CD14-positive monocyte (primary cell): ENCODE measurements at regions of chr6 and their contacts with region 1.

Region 1: GRCh38 chr6:44172731-44173500 is 14.3 kb downstream of the CAPN11 start:
- DNase-seq: peak; percentile 77 to 82 (median 80)
- H3K4me3 ChIP-seq: no peak overlapping the region
- H3K4me3 Mint-ChIP-seq: no peak overlapping the region
- H3K27ac ChIP-seq: no peak overlapping the region
- H3K27ac Mint-ChIP-seq: peak overlapping the region in 1 of 7 donors; percentile 64
- H3K4me1 ChIP-seq: peaks cover 11 to 13% of the 10 kb centered on the region in 2 donors
- H3K4me1 Mint-ChIP-seq: peaks cover 19% of the 10 kb centered on the region
- H3K27me3 ChIP-seq: no peaks in the 10 kb centered on the region
- H3K27me3 Mint-ChIP-seq: peaks cover 9 to 15% (median 11%) of the 10 kb centered on the region in 3 donors
- CTCF ChIP-seq: peak; percentile 84

Region 2: DNA sequence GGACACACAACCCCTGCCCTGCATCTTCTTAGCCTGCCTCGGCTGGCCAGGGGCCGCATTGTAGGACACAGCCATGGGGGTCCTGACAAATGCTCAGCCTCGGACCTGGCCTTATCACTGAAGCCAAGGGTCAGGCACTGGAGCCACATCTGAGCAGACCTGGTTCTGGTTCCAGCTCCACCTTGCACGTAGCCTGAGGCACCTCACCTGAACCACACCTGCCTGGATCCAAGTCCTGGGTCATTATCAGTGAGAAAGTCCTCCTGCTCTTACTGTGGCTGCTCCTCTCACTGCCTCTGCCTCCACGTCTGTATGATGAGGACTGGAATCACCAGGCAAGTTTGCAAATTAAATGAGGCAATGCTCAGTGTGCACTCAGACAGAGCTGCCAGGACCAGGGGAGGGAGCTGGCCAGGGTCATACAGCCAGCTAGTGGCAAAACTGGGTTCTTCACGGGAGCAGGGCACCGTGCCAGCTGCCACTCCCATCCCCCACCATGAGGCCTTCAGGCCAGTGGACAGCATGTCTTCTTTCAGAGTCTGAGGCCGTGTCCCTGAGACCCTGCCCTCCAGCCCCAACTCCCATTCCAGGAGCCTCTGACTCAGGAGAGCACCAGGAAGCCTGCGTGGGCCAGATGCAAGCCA is 85.9 kb before region 1 on chr6:
- intact Hi-C with region 1: no loop called
- DNase-seq: no peak
- H3K4me3 ChIP-seq: no peak overlapping the region
- H3K4me3 Mint-ChIP-seq: no peak overlapping the region
- H3K27ac ChIP-seq: no peak overlapping the region
- H3K27ac Mint-ChIP-seq: peak overlapping the region in 1 of 7 donors; percentile 74
- H3K4me1 ChIP-seq: no peaks in the 10 kb centered on the region
- H3K4me1 Mint-ChIP-seq: no peaks in the 10 kb centered on the region
- H3K27me3 ChIP-seq: no peaks in the 10 kb centered on the region
- H3K27me3 Mint-ChIP-seq: peaks cover 0 to 3% (median 0%) of the 10 kb centered on the region in 3 donors
- CTCF ChIP-seq: no peak

Region 3: GRCh38 chr6:44237813-44238433 is 65.0 kb after region 1 on chr6:
- intact Hi-C with region 1: loop called (anchors 5 kb)
- DNase-seq: peak; percentile 84 to 90 (median 85)
- H3K4me3 ChIP-seq: peak overlapping the region; percentile 56 to 86 (median 76)
- H3K4me3 Mint-ChIP-seq: peak overlapping the region; percentile 83 to 90
- H3K27ac ChIP-seq: peak overlapping the region; percentile 65 to 96
- H3K27ac Mint-ChIP-seq: peak overlapping the region; percentile 90 to 99 (median 97)
- H3K4me1 ChIP-seq: peaks cover 29 to 32% of the 10 kb centered on the region in 2 donors
- H3K4me1 Mint-ChIP-seq: peaks cover 38% of the 10 kb centered on the region
- H3K27me3 ChIP-seq: no peaks in the 10 kb centered on the region
- H3K27me3 Mint-ChIP-seq: peaks cover 2 to 3% (median 3%) of the 10 kb centered on the region in 3 donors
- CTCF ChIP-seq: peak; percentile 99

Region 4: DNA sequence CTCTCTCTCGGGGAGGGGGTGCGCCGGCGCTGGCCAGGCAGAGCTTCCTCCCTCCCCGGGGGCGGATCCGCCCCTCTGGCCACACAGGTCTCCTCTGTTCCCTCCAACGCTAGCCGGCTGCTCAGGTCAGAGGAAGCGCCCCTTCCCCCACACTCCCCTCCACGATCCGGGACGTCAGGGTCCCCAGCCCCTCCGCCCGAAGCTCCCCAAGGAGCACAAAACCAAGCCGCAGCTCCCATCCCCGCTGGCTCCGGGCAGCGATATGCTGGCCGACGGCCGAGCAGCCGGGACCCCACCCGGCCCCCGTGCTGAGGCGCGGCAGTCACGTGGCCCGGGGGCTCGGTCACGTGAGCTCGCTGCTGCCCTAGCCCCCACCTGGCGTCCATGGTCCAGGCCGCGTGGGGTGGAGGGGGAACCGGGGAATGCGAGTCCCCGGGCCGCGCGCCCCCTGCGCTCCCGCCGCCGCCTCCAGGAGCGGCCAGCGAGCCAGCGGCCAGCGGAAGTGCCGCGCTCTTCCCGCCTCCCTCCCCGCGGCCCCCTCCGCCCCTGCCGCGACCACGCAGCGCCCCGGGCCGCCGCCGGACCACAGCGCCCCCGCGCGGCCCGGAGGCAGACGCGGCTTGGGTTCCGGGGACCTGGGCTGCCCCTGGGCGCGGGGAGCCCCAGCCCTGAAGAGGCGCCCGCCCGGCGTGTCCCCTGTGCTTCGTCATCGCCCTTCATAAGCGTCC is 84.3 kb after region 1 on chr6 and contains the start of gene SLC35B2:
- intact Hi-C with region 1: loop called (anchors 1 to 5 kb)
- DNase-seq: peak; percentile 76 to 90 (median 79)
- H3K4me3 ChIP-seq: peak within 1 kb of the TSS; percentile 49 to 85 (median 69)
- H3K4me3 Mint-ChIP-seq: peak within 1 kb of the TSS; percentile 79 to 87
- H3K27ac ChIP-seq: peak within 1 kb of the TSS; percentile 66 to 69
- H3K27ac Mint-ChIP-seq: peak within 1 kb of the TSS; percentile 83 to 97 (median 91)
- H3K4me1 ChIP-seq: peaks cover 29 to 52% of the 10 kb centered on the region in 2 donors
- H3K4me1 Mint-ChIP-seq: peaks cover 58% of the 10 kb centered on the region
- H3K27me3 ChIP-seq: no peaks in the 10 kb centered on the region
- H3K27me3 Mint-ChIP-seq: peaks cover 0 to 6% (median 2%) of the 10 kb centered on the region in 3 donors
- CTCF ChIP-seq: peak; percentile 87
- polyA plus RNA-seq, gene SLC35B2: 17.4 to 54.0 (median 30.6) TPM

Region 5: GRCh38 chr6:44338228-44339122 is 165.6 kb after region 1 on chr6:
- intact Hi-C with region 1: loop called (anchors 1 to 2 kb)
- DNase-seq: peak; percentile 51 to 70 (median 70)
- H3K4me3 ChIP-seq: no peak overlapping the region
- H3K4me3 Mint-ChIP-seq: no peak overlapping the region
- H3K27ac ChIP-seq: no peak overlapping the region
- H3K27ac Mint-ChIP-seq: peak overlapping the region in 1 of 7 donors; percentile 25
- H3K4me1 ChIP-seq: peaks cover 25 to 28% of the 10 kb centered on the region in 2 donors
- H3K4me1 Mint-ChIP-seq: peaks cover 32% of the 10 kb centered on the region
- H3K27me3 ChIP-seq: peaks cover 0 to 3% of the 10 kb centered on the region in 2 donors
- H3K27me3 Mint-ChIP-seq: peaks cover 4 to 7% (median 6%) of the 10 kb centered on the region in 3 donors
- CTCF ChIP-seq: peak; percentile 84